ENCODE measurements at regions of chr9 and their contacts with region 1.

Region 1: GRCh38 chr9:128786681-128787601 is at the start of gene TBC1D13:
- DNase-seq: peak; percentile 93 to 98
- ATAC-seq: peak; percentile 99
- H3K4me3 ChIP-seq: peak within 1 kb of the TSS; percentile 73 to 90
- H3K27ac ChIP-seq: peak within 1 kb of the TSS in 1 of 2 donors; percentile 64
- H3K4me1 ChIP-seq: no peaks in the 10 kb centered on the region
- H3K27me3 ChIP-seq: no peaks in the 10 kb centered on the region
- total RNA-seq, gene TBC1D13: 23.6 to 27.7 TPM

Region 2: DNA sequence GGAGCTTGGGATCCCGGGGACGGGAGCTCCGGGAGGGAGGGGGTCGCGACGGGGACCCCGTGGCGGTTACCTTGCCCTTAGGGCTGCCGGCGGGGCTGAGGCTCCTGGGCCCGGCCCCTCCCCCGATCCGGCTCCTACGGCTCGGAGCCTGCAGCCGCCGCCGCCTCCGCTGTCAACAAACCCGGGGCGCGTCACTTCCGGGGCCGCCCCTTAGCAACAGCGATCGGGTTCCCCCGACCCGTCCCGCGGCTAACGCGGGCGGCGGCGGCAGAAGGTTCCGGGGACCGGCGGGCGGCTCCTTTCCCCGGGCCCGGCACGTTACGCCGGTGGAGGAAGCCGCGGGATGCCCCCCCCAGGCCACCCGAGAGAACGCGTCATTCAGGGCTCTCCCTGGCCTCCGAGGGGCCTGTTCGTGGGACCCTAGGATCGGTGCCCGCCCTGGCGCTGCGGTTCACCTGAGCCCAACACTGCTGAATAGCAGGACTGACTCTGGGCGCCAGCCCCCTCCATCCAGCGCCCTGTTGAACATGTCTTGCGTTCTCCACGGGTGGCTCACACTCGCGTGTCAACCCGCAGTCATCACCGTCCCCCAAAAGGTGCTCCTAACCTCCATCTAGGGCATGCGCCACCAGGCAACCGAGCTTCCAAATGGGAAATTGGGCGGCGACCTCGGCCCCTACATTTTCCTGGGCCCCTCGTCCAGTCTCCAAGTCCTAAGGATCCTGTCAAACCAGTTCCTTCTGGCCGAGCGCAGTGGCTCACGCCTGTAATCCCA is 15.0 kb before region 1 on chr9 and contains the start of gene ZER1:
- intact Hi-C with region 1: loop called (anchors 1 to 2 kb)
- DNase-seq: peak; percentile 95 to 98
- ATAC-seq: peak; percentile 99
- H3K4me3 ChIP-seq: peak within 1 kb of the TSS; percentile 60 to 85
- H3K27ac ChIP-seq: peak within 1 kb of the TSS; percentile 10 to 92
- H3K4me1 ChIP-seq: no peaks in the 10 kb centered on the region
- H3K27me3 ChIP-seq: no peaks in the 10 kb centered on the region
- total RNA-seq, gene ZER1: 29.6 to 42.9 TPM

Region 3: DNA sequence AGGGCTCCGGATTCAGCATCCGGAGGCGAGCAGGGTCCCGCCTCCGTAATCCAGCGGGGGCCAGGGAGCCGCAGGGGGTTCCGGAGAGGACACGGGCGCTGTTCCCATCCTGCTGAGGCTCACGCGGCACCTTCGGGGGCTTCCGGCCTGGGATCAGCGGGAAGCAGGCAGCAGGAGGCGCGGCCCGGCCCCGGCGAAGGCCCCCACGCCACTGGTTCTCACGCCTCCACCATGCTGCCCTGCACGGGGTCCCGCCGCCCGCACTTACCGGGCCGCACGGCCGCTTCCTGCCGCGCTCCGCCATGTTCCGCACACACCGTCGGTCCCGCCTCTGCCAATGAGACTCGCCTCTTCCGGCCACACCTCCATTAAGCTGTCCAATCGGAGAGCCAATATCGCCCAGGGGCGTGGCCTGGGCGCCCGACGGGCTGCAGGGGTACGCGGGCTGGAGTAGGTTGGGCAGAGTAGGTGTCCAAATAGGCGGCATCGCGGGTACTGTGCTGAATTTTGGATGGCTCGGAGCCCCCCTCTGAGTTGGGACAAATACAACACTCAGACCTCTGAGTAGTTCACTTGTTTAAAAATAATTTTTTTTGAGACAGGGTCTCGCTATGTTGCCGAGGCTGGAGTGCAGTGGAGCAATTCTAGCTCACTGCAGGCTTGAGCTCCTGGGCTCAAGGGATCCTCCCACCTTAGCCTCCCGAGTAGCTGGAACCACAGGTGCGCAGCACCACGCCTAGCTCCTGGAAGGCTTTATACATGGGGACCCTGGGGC is 42.7 kb after region 1 on chr9 and contains the start of gene SPOUT1:
- intact Hi-C with region 1: no loop called
- DNase-seq: peak; percentile 95 to 97
- ATAC-seq: peak; percentile 96
- H3K4me3 ChIP-seq: peak within 1 kb of the TSS; percentile 31 to 44
- H3K27ac ChIP-seq: peak within 1 kb of the TSS in 1 of 2 donors; percentile 37
- H3K4me1 ChIP-seq: no peaks in the 10 kb centered on the region
- H3K27me3 ChIP-seq: no peaks in the 10 kb centered on the region
- total RNA-seq, gene SPOUT1: 28.6 to 32.8 TPM